Mammary epithelial cell (primary cell): ENCODE measurements at regions of chr21 and their contacts with region 1.

Region 1: GRCh38 chr21:28745131-28746016 is 247.3 kb downstream of the LTN1 start:
- DNase-seq: peak; percentile 65
- H3K4me3 ChIP-seq: peak overlapping the region; percentile 21 to 52 (median 47)
- H3K27ac ChIP-seq: peak overlapping the region; percentile 21
- H3K4me1 ChIP-seq: no peaks in the 10 kb centered on the region
- H3K27me3 ChIP-seq: no peaks in the 10 kb centered on the region
- CTCF ChIP-seq: peak; percentile 97 to 98

Region 2: GRCh38 chr21:26842976-26843932 is 1902.1 kb before region 1 on chr21:
- CTCF ChIA-PET with region 1: no interaction called
- dilution Hi-C with region 1: no loop called
- in situ Hi-C with region 1: loop called (anchors 10 to 25 kb)
- intact Hi-C with region 1: no loop called
- DNase-seq: peak; percentile 91
- H3K4me3 ChIP-seq: peak overlapping the region; percentile 70 to 85 (median 74)
- H3K27ac ChIP-seq: peak overlapping the region; percentile 80
- H3K4me1 ChIP-seq: peaks cover 27% of the 10 kb centered on the region
- H3K27me3 ChIP-seq: no peaks in the 10 kb centered on the region
- CTCF ChIP-seq: peak in 1 of 2 donors; percentile 29

Region 3: GRCh38 chr21:27564684-27565301 is 1180.6 kb before region 1 on chr21:
- CTCF ChIA-PET with region 1: no interaction called
- dilution Hi-C with region 1: no loop called
- in situ Hi-C with region 1: no loop called
- intact Hi-C with region 1: loop called (anchors 5 kb)
- DNase-seq: peak; percentile 42
- H3K4me3 ChIP-seq: no peak overlapping the region
- H3K27ac ChIP-seq: no peak overlapping the region
- H3K4me1 ChIP-seq: peaks cover 12% of the 10 kb centered on the region
- H3K27me3 ChIP-seq: no peaks in the 10 kb centered on the region
- CTCF ChIP-seq: peak; percentile 62 to 86

Region 4: GRCh38 chr21:28069450-28069923 is 675.9 kb before region 1 on chr21:
- CTCF ChIA-PET with region 1: no interaction called
- dilution Hi-C with region 1: no loop called
- in situ Hi-C with region 1: loop called (anchors 25 kb)
- intact Hi-C with region 1: loop called (anchors 5 kb)
- DNase-seq: peak; percentile 38
- H3K4me3 ChIP-seq: no peak overlapping the region
- H3K27ac ChIP-seq: no peak overlapping the region
- H3K4me1 ChIP-seq: no peaks in the 10 kb centered on the region
- H3K27me3 ChIP-seq: no peaks in the 10 kb centered on the region
- CTCF ChIP-seq: no peak

Region 5: GRCh38 chr21:28522014-28522799 is 223.2 kb before region 1 on chr21:
- CTCF ChIA-PET with region 1: interaction called, 5 read pairs
- dilution Hi-C with region 1: no loop called
- in situ Hi-C with region 1: loop called in 1 of 2 experiments (anchors 10 kb)
- intact Hi-C with region 1: loop called (anchors 1 kb)
- DNase-seq: no peak
- H3K4me3 ChIP-seq: no peak overlapping the region
- H3K27ac ChIP-seq: no peak overlapping the region
- H3K4me1 ChIP-seq: peaks cover 3% of the 10 kb centered on the region
- H3K27me3 ChIP-seq: no peaks in the 10 kb centered on the region
- CTCF ChIP-seq: peak; percentile 45 to 57

Region 6: DNA sequence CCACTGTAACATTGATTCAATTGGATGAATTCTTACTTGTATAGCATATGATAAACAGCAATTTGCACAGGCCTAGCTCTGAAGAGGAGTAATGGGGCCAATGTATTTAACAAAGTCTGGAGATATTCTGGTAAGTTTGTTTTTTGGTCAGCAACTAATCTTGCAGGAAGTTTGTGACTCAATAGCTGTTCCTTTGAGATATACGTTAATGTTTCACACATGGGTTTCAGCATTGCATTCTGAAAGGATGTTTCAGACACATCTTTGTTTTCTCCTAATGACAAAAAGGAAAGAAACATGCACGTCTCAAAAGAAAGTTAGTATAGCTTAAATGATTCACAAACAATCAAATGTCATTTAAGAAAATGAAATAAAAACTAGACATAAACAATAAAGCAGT is 198.3 kb after region 1 on chr21:
- CTCF ChIA-PET with region 1: no interaction called
- dilution Hi-C with region 1: no loop called
- in situ Hi-C with region 1: no loop called
- intact Hi-C with region 1: loop called (anchors 1 kb)
- DNase-seq: no peak
- H3K4me3 ChIP-seq: no peak overlapping the region
- H3K27ac ChIP-seq: no peak overlapping the region
- H3K4me1 ChIP-seq: no peaks in the 10 kb centered on the region
- H3K27me3 ChIP-seq: no peaks in the 10 kb centered on the region
- CTCF ChIP-seq: no peak